Calu3 (cell line): ENCODE measurements at regions of chr6 and their contacts with region 1.

Region 1: GRCh38 chr6:35224720-35225119 is 11.0 kb downstream of the SCUBE3 start:
- DNase-seq: no peak
- H3K4me3 Mint-ChIP-seq: no peak overlapping the region
- H3K27ac Mint-ChIP-seq: no peak overlapping the region
- H3K4me1 Mint-ChIP-seq: no peaks in the 10 kb centered on the region
- H3K27me3 Mint-ChIP-seq: peaks cover 16% of the 10 kb centered on the region
- CTCF ChIP-seq: no peak

Region 2: GRCh38 chr6:34901930-34902329 is 322.8 kb before region 1 on chr6:
- CTCF ChIA-PET with region 1: interaction called, 16 read pairs
- intact Hi-C with region 1: no loop called
- DNase-seq: no peak
- H3K4me3 Mint-ChIP-seq: peak overlapping the region; percentile 23
- H3K27ac Mint-ChIP-seq: peak overlapping the region; percentile 72
- H3K4me1 Mint-ChIP-seq: peaks cover 49% of the 10 kb centered on the region
- H3K27me3 Mint-ChIP-seq: no peaks in the 10 kb centered on the region
- CTCF ChIP-seq: no peak